ENCODE measurements at regions of chr2 and their contacts with region 1.

Region 1: GRCh38 chr2:102063941-102064678 is 72.3 kb downstream of the IL1R2 start:
- DNase-seq: peak; percentile 76 to 88 (median 86)
- H3K4me3 ChIP-seq: peak overlapping the region in 2 of 3 experiments; percentile 5 to 67
- H3K4me3 Mint-ChIP-seq: peak overlapping the region; percentile 66 to 77
- H3K27ac ChIP-seq: peak overlapping the region; percentile 92 to 94
- H3K27ac Mint-ChIP-seq: peak overlapping the region; percentile 93 to 99 (median 98)
- H3K4me1 ChIP-seq: peaks cover 34 to 44% of the 10 kb centered on the region in 2 donors
- H3K4me1 Mint-ChIP-seq: peaks cover 41% of the 10 kb centered on the region
- H3K27me3 ChIP-seq: no peaks in the 10 kb centered on the region
- H3K27me3 Mint-ChIP-seq: peaks cover 3 to 5% (median 4%) of the 10 kb centered on the region in 3 donors
- CTCF ChIP-seq: no peak

Region 2: GRCh38 chr2:102082571-102083392 is 18.7 kb after region 1 on chr2:
- intact Hi-C with region 1: loop called in 1 of 2 experiments (anchors 2 kb)
- DNase-seq: peak; percentile 90 to 94 (median 91)
- H3K4me3 ChIP-seq: peak overlapping the region in 2 of 3 experiments; percentile 36 to 64
- H3K4me3 Mint-ChIP-seq: peak overlapping the region; percentile 58 to 89
- H3K27ac ChIP-seq: peak overlapping the region; percentile 67 to 94
- H3K27ac Mint-ChIP-seq: peak overlapping the region; percentile 94 to 100 (median 98)
- H3K4me1 ChIP-seq: peaks cover 34 to 44% of the 10 kb centered on the region in 2 donors
- H3K4me1 Mint-ChIP-seq: peaks cover 39% of the 10 kb centered on the region
- H3K27me3 ChIP-seq: no peaks in the 10 kb centered on the region
- H3K27me3 Mint-ChIP-seq: peaks cover 1 to 8% (median 2%) of the 10 kb centered on the region in 3 donors
- CTCF ChIP-seq: no peak

Region 3: GRCh38 chr2:102103992-102104871 is 40.1 kb after region 1 on chr2:
- intact Hi-C with region 1: loop called in 1 of 2 experiments (anchors 5 kb)
- DNase-seq: peak; percentile 86 to 96 (median 93)
- H3K4me3 ChIP-seq: peak overlapping the region; percentile 16 to 57 (median 40)
- H3K4me3 Mint-ChIP-seq: peak overlapping the region; percentile 80 to 95
- H3K27ac ChIP-seq: peak overlapping the region in 1 of 2 donors; percentile 39
- H3K27ac Mint-ChIP-seq: peak overlapping the region; percentile 72 to 92 (median 83)
- H3K4me1 ChIP-seq: peaks cover 11 to 13% of the 10 kb centered on the region in 2 donors
- H3K4me1 Mint-ChIP-seq: peaks cover 19% of the 10 kb centered on the region
- H3K27me3 ChIP-seq: no peaks in the 10 kb centered on the region
- H3K27me3 Mint-ChIP-seq: peaks cover 3 to 10% (median 9%) of the 10 kb centered on the region in 3 donors
- CTCF ChIP-seq: no peak

Region 4: GRCh38 chr2:102273619-102274211 is 209.6 kb after region 1 on chr2:
- intact Hi-C with region 1: no loop called
- DNase-seq: peak; percentile 78 to 93 (median 91)
- H3K4me3 ChIP-seq: no peak overlapping the region
- H3K4me3 Mint-ChIP-seq: peak overlapping the region in 1 of 2 donors; percentile 20
- H3K27ac ChIP-seq: no peak overlapping the region
- H3K27ac Mint-ChIP-seq: peak overlapping the region in 4 of 7 donors; percentile 27 to 65 (median 34)
- H3K4me1 ChIP-seq: peaks cover 3 to 8% of the 10 kb centered on the region in 2 donors
- H3K4me1 Mint-ChIP-seq: peaks cover 15% of the 10 kb centered on the region
- H3K27me3 ChIP-seq: peaks cover 49 to 63% of the 10 kb centered on the region in 2 donors
- H3K27me3 Mint-ChIP-seq: peaks cover 56 to 77% (median 59%) of the 10 kb centered on the region in 3 donors
- CTCF ChIP-seq: no peak